GM10248 (cell line): ENCODE measurements at regions of chr2 and their contacts with region 1.

Region 1: GRCh38 chr2:155151945-155152344 is 453.4 kb downstream of the KCNJ3 start:
- DNase-seq: no peak
- CTCF ChIP-seq: no peak

Region 2: DNA sequence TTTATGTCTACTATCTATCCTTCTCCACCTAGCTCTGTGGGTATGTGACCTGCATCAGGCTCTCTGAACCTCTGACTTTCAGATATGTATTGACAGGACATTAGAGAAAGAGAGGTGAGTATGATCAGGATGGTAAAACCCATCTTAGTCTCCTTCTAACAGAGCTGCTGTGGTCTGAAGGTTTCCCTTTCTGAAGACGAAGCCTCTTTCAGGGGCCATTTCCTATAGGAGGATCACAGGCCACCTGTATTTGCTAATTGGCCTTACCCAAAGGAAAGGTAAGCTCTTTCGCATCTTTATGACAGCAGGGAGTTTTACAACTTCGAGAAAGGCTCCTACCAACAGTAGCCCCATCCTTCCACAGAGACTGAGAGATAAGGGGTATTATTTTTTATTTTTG is 10.5 kb before region 1 on chr2:
- CTCF ChIA-PET with region 1: interaction called, 30 read pairs
- POLR2A ChIA-PET with region 1: no interaction called
- DNase-seq: no peak
- CTCF ChIP-seq: no peak